Mammary epithelial cell (primary cell): ENCODE measurements at regions of chr2 and their contacts with region 1.

Region 1: GRCh38 chr2:74261204-74261864 is 62.9 kb downstream of the MTHFD2 start:
- DNase-seq: peak; percentile 28
- H3K4me3 ChIP-seq: no peak overlapping the region
- H3K27ac ChIP-seq: no peak overlapping the region
- H3K4me1 ChIP-seq: no peaks in the 10 kb centered on the region
- H3K27me3 ChIP-seq: no peaks in the 10 kb centered on the region
- CTCF ChIP-seq: peak; percentile 12 to 46

Region 2: GRCh38 chr2:73830871-73831401 is 430.4 kb before region 1 on chr2:
- CTCF ChIA-PET with region 1: no interaction called
- dilution Hi-C with region 1: no loop called
- in situ Hi-C with region 1: no loop called
- intact Hi-C with region 1: no loop called
- DNase-seq: peak; percentile 98
- H3K4me3 ChIP-seq: peak overlapping the region; percentile 30 to 85 (median 70)
- H3K27ac ChIP-seq: peak overlapping the region; percentile 94
- H3K4me1 ChIP-seq: peaks cover 26% of the 10 kb centered on the region
- H3K27me3 ChIP-seq: no peaks in the 10 kb centered on the region
- CTCF ChIP-seq: no peak

Region 3: GRCh38 chr2:73907840-73908452 is 353.4 kb before region 1 on chr2:
- CTCF ChIA-PET with region 1: no interaction called
- dilution Hi-C with region 1: no loop called
- in situ Hi-C with region 1: no loop called
- intact Hi-C with region 1: loop called (anchors 5 kb)
- DNase-seq: peak; percentile 31
- H3K4me3 ChIP-seq: no peak overlapping the region
- H3K27ac ChIP-seq: no peak overlapping the region
- H3K4me1 ChIP-seq: no peaks in the 10 kb centered on the region
- H3K27me3 ChIP-seq: no peaks in the 10 kb centered on the region
- CTCF ChIP-seq: peak in 1 of 2 donors; percentile 46